Common myeloid progenitor, CD34-positive (primary cell): ENCODE measurements at regions of chr7 and their contacts with region 1.

Region 1: DNA sequence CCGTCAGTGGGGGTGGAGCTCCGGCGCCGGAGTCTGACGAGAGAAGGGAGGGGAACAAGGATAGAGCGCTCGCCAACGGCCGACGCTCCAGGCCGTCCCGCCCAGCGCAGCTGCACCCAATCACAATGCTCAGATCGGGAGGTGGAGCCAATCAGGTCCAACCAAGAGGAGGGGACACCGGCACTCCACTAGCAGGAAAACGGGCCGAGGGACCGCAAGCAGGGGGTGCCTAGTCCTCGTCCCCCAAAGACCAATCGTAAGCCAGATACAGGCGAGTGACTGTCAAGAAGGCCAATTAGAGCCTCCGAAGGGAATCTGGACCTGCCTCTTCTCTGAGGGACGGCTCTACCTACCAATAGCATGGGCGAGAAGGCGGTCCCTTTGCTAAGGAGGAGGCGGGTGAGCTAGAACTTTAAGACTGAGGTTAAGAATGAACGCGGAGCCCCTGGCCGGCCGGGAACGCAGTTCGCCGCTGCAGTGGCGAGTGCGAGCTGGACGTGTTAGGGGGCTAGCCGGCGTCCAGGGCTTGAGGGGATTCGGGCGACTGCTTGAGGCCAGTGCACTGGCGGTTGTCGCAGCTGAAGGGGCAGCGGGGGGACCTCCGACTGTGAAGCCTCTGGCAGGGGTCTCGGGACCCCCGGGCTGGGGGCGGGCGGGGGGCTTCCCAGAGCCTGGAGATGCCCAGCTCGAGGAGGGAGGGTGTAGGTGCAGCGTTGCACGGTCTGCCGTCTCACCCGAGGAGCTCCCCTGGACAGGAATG is at the start of gene FBXO24:
- DNase-seq: peak; percentile 100
- H3K4me3 ChIP-seq: peak within 1 kb of the TSS; percentile 94 to 96 (median 95)
- H3K27ac ChIP-seq: peak within 1 kb of the TSS; percentile 78 to 94
- H3K4me1 ChIP-seq: peaks cover 6 to 60% (median 51%) of the 10 kb centered on the region in 4 experiments
- H3K27me3 ChIP-seq: peaks cover 0 to 4% (median 0%) of the 10 kb centered on the region in 5 experiments

Region 2: GRCh38 chr7:100469227-100470044 is 117.0 kb before region 1 on chr7:
- CTCF ChIA-PET with region 1: interaction called, 13 read pairs
- POLR2A ChIA-PET with region 1: no interaction called
- DNase-seq: peak; percentile 66 to 78 (median 71)
- H3K4me3 ChIP-seq: no peak overlapping the region
- H3K27ac ChIP-seq: no peak overlapping the region
- H3K4me1 ChIP-seq: peaks cover 0 to 26% (median 22%) of the 10 kb centered on the region in 4 experiments
- H3K27me3 ChIP-seq: no peaks in the 10 kb centered on the region

Region 3: GRCh38 chr7:100563809-100564400 is 22.5 kb before region 1 on chr7:
- CTCF ChIA-PET with region 1: interaction called, 242 read pairs
- POLR2A ChIA-PET with region 1: interaction called, 34 read pairs
- DNase-seq: peak; percentile 77 to 89 (median 85)
- H3K4me3 ChIP-seq: no peak overlapping the region
- H3K27ac ChIP-seq: no peak overlapping the region
- H3K4me1 ChIP-seq: peaks cover 0 to 25% (median 20%) of the 10 kb centered on the region in 4 experiments
- H3K27me3 ChIP-seq: no peaks in the 10 kb centered on the region

Region 4: DNA sequence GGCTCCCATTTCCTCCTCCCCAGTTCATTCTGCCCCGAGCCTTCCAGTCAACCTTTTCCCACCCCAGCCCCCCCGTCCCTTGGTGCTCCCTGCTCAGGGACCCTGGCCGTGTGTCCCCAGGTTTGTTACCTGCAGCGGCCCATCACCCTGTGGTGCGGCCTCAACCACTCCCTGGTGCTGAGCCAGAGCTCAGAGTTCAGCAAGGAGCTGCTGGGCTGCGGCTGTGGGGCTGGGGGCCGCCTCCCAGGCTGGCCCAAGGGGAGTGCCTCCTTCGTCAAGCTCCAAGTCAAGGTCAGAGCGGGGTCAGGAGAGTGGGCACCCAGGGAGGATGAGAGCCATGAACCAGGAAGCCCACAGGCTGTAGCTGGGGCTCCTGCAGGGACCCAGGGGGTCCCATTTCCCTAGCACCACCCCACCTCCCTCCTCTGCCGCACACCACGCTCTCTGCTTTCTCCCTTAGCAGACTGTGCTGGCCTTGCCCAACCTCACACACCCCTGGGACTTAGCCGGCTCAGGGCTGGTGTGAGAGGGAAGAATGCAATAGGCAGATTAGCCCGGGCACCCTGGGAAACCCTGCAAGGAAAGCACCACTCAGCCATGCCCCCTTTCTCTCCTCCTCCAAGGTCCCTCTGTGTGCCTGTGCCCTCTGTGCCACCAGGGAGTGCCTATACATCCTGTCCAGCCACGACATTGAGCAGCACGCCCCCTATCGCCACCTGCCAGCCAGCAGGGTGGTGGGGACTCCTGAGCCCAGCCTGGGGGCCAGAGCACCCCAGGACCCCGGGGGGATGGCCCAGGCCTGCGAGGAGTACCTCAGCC is 13.7 kb after region 1 on chr7:
- CTCF ChIA-PET with region 1: interaction called, 24 read pairs
- POLR2A ChIA-PET with region 1: interaction called, 3 read pairs
- DNase-seq: no peak
- H3K4me3 ChIP-seq: no peak overlapping the region
- H3K27ac ChIP-seq: no peak overlapping the region
- H3K4me1 ChIP-seq: peaks cover 0 to 20% (median 18%) of the 10 kb centered on the region in 4 experiments
- H3K27me3 ChIP-seq: peaks cover 0 to 2% (median 1%) of the 10 kb centered on the region in 5 experiments

Region 5: DNA sequence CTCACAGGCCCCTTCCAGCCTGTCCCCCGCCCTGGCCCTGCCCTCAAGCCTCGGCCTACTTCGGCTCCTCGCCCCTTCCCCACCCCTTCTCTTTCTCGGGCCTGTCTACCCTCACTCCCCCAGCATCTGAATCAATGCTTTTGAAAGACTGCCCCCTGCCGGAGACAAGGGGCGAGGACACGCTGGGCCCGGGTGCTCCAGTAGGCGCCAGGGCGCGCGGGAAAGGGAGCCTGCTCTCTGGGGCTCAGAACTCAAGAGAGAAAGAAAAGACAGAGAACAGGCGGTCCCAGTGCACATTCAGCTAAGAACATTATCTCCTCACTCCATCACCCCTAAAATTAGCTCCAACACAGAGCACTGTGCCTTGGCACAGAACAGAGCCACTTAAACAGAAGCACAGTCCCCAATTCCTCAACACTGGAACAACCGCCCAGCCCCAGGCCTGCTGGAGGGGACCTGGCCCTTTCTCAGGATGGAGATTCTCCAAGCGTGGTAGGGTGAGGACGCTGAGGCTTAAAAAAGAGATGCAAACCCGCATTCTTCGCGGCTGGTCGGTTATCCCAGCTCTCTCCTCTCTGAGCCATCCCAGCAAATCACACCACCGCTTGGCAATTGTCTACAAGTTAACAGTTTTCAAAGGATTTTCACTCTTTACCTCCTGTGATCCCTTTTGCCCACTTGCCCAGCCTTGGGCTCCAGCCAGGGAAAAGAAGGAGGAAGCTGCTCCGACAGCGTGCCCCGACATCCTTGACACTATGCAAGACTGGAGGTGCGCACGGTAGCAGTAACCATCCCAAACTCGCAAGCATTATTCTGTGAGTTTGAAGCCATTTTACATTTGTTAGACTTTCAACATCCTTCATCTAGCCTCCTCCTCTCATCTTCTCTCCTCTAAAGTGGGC is 105.5 kb after region 1 on chr7:
- CTCF ChIA-PET with region 1: interaction called, 21 read pairs
- POLR2A ChIA-PET with region 1: no interaction called
- DNase-seq: peak; percentile 74 to 86 (median 81)
- H3K4me3 ChIP-seq: peak overlapping the region in 5 of 7 experiments; percentile 47 to 94 (median 85)
- H3K27ac ChIP-seq: no peak overlapping the region
- H3K4me1 ChIP-seq: peaks cover 11 to 35% (median 31%) of the 10 kb centered on the region in 4 experiments
- H3K27me3 ChIP-seq: peaks cover 0 to 2% (median 0%) of the 10 kb centered on the region in 5 experiments